HepG2 (cell line): ENCODE measurements at regions of chr2 and their contacts with region 1.

Region 1: GRCh38 chr2:206800506-206801417 is 35.4 kb downstream of the FASTKD2 start:
- DNase-seq: peak; percentile 65
- ATAC-seq: peak; percentile 79
- H3K4me3 ChIP-seq: no peak overlapping the region
- H3K27ac ChIP-seq: no peak overlapping the region
- H3K4me1 ChIP-seq: no peaks in the 10 kb centered on the region
- H3K27me3 ChIP-seq: no peaks in the 10 kb centered on the region
- CTCF ChIP-seq: peak; percentile 88
- EP300 ChIP-seq: no peak
- POLR2A ChIP-seq: no peak
- RAD21 ChIP-seq: peak; percentile 89

Region 2: GRCh38 chr2:206840999-206841398 is 40.2 kb after region 1 on chr2:
- CTCF ChIA-PET with region 1: no interaction called
- POLR2A ChIA-PET with region 1: no interaction called
- in situ Hi-C with region 1: no loop called
- intact Hi-C with region 1: loop called (anchors 1 kb)
- DNase-seq: no peak
- ATAC-seq: peak; percentile 98
- H3K4me3 ChIP-seq: no peak overlapping the region
- H3K27ac ChIP-seq: no peak overlapping the region
- H3K4me1 ChIP-seq: peaks cover 2% of the 10 kb centered on the region
- H3K27me3 ChIP-seq: no peaks in the 10 kb centered on the region
- CTCF ChIP-seq: peak; percentile 38; the same call in 1 of the 2 replicates
- EP300 ChIP-seq: no peak
- POLR2A ChIP-seq: no peak
- RAD21 ChIP-seq: no peak

Region 3: DNA sequence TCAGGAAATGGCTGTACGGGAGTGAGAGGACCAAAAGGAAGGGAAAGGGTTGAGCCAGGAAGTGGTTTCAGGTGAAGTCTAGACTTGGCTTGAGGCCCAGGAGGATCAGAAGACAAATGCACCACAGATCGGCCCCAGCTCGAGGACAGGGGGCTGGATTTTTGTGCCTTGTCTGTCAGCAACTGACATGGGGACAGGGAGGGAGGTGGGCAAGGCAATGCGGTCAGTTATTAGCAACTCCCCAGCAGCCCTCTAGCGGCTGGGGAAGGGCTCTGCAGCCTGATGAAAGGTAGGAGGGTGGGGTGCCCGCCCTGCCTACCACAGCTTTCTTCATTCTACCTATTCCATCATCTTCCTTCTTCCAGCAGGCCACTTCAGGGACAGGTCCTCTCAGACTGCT is 188.5 kb after region 1 on chr2:
- CTCF ChIA-PET with region 1: interaction called, 21 read pairs
- POLR2A ChIA-PET with region 1: no interaction called
- in situ Hi-C with region 1: loop called (anchors 5 kb)
- intact Hi-C with region 1: loop called (anchors 1 kb)
- DNase-seq: peak; percentile 49
- ATAC-seq: peak; percentile 100
- H3K4me3 ChIP-seq: no peak overlapping the region
- H3K27ac ChIP-seq: no peak overlapping the region
- H3K4me1 ChIP-seq: no peaks in the 10 kb centered on the region
- H3K27me3 ChIP-seq: no peaks in the 10 kb centered on the region
- CTCF ChIP-seq: peak; percentile 89
- EP300 ChIP-seq: no peak
- POLR2A ChIP-seq: no peak
- RAD21 ChIP-seq: peak; percentile 70